Right ventricle myocardium inferior (tissue), 1 donor: ENCODE measurements at regions of chr20 and their contacts with region 1.

Region 1: DNA sequence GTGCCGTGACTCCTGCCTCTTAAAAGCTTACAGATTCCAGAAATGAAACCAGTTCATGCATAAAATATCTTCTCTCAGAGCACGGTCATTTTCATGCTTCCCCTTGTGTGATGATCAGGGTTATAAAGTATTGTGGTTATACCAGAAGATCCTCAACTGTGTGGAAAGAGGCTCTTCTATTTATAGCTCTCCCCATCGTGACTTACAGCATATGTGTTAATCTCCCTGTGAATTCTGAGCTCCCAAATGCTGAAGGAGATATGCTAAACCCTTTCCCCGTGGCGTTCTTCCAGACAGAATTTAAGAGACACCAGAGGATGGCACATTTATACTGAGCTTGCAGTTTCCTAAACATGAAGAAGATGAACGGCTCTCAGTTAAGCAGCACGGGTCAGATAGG is 158.8 kb downstream of the CDH26 start:
- DNase-seq: no peak
- ATAC-seq: no peak

Region 2: DNA sequence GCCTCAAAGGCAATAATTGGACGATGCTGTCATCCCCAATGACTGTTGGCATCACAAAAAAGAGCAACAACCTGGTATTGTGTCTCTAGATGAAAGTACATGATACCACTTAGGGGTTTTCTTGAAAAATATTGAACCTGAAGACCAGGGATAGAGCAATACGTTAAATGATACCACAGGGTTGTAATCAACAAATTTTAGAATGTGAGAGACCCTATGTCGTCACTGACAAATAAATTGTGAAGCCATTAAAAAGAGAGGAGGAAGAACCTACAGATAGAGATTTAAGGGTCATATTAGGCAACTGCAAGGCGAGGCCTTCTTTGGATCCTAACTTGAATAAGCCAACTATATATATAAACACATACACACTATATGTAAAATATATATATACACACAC is 47.5 kb after region 1 on chr20:
- intact Hi-C with region 1: loop called (anchors 1 kb)
- DNase-seq: no peak
- ATAC-seq: no peak

Region 3: DNA sequence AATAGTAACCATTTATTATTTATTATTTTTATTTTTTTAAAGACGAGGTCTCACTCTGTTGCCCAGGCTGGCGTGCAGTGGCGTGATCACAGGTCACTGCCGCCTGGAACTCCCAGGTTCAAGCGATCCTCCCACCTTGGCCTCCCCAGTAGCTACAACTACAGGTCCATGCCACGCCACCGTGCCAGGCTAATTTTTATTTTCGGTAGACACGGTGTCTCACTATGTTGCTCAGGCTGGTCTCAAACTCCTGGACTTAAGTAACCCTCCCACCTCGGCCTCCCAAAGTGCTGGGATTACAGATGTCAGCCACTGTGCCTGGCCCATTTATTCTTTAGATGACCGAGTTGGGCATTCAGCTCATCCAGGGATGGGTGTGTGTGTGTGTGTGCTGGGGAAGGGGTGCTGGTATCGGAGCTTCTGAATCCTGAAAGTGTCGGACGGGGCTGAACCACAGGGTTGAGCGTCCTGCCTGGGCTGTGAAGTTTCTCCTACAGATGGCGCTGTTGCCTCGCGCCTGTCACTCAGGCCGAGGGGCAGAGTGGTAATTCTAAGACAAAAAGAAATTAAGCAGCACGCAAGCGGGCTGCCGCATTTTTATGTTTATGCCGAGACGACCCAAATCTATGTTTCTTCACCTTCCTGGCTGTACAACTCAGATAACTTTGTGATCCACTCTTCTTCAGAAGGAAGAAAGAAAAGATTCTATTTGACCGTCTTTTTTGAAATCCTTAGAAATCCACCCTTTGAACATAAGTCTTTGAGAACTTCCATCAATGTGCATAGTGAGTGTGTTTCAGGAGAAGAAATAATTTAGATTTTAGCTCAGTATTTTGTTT is 93.9 kb after region 1 on chr20:
- intact Hi-C with region 1: no loop called
- DNase-seq: peak; percentile 83
- ATAC-seq: peak; percentile 86

Region 4: GRCh38 chr20:60381643-60382400 is 264.8 kb after region 1 on chr20:
- intact Hi-C with region 1: no loop called
- DNase-seq: no peak
- ATAC-seq: no peak